ENCODE measurements at regions of chr16 and their contacts with region 1.

Region 1: DNA sequence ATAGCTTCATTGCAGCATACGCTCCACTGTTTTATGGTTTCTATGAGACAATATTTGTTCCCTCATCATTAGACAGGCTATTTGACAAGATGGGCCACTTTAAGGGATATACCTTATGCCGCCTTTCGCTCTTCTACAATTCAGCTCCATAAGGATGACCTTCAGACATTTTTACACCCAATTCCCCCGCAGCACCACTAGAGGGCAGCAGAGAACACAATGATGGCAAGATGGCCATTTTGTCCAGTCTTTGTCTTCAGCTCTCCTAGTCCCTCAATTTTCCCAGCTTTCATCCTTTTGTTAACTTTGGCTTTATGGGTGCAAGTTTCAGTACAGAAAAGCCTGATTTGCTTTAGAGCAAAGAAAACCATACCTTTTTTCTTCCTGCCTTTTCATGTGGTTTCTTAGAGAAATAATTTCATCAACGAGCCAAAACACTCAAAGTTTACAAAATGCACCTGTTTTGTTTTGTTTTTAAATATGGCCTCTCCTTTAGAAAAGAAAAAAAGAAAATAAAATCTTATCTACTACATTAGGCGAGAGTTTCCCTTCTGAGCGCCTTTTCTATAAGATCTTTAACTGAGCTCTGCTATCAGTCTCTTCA is 355.3 kb downstream of the TOX3 start:
- DNase-seq: peak; percentile 33 to 84
- H3K4me3 ChIP-seq: no peak overlapping the region
- H3K27ac ChIP-seq: no peak overlapping the region
- H3K4me1 ChIP-seq: peaks cover 0 to 3% (median 0%) of the 10 kb centered on the region in 4 experiments; a peak in 1 of 7 replicates
- H3K27me3 ChIP-seq: no peaks in the 10 kb centered on the region
- CTCF ChIP-seq: peak; percentile 71 to 92 (median 85)
- EP300 ChIP-seq: no peak
- POLR2A ChIP-seq: no peak
- RAD21 ChIP-seq: peak; percentile 96 to 98

Region 2: GRCh38 chr16:52171481-52171880 is 20.2 kb before region 1 on chr16:
- CTCF ChIA-PET with region 1: interaction called, 17 read pairs
- POLR2A ChIA-PET with region 1: no interaction called
- DNase-seq: no peak
- H3K4me3 ChIP-seq: no peak overlapping the region
- H3K27ac ChIP-seq: no peak overlapping the region
- H3K4me1 ChIP-seq: no peaks in the 10 kb centered on the region
- H3K27me3 ChIP-seq: no peaks in the 10 kb centered on the region
- CTCF ChIP-seq: peak in 2 of 3 experiments; percentile 21 to 22; a peak in 1 of 4 replicates
- EP300 ChIP-seq: no peak
- POLR2A ChIP-seq: no peak
- RAD21 ChIP-seq: peak; percentile 57 to 64

Region 3: GRCh38 chr16:52203096-52203495 is 11.5 kb after region 1 on chr16:
- CTCF ChIA-PET with region 1: interaction called, 10 read pairs
- POLR2A ChIA-PET with region 1: no interaction called
- DNase-seq: no peak
- H3K4me3 ChIP-seq: no peak overlapping the region
- H3K27ac ChIP-seq: no peak overlapping the region
- H3K4me1 ChIP-seq: no peaks in the 10 kb centered on the region
- H3K27me3 ChIP-seq: no peaks in the 10 kb centered on the region
- CTCF ChIP-seq: no peak
- EP300 ChIP-seq: no peak
- POLR2A ChIP-seq: no peak
- RAD21 ChIP-seq: no peak

Region 4: GRCh38 chr16:52597580-52598483 is 406.2 kb after region 1 on chr16:
- CTCF ChIA-PET with region 1: no interaction called
- POLR2A ChIA-PET with region 1: no interaction called
- DNase-seq: peak in 1 of 2 experiments; percentile 45
- H3K4me3 ChIP-seq: no peak overlapping the region
- H3K27ac ChIP-seq: peak overlapping the region; percentile 4; the same call in 1 of the 2 replicates
- H3K4me1 ChIP-seq: peaks cover 0 to 5% (median 4%) of the 10 kb centered on the region in 4 experiments; a peak in 3 of 7 replicates
- H3K27me3 ChIP-seq: no peaks in the 10 kb centered on the region
- CTCF ChIP-seq: no peak
- EP300 ChIP-seq: no peak
- POLR2A ChIP-seq: no peak
- RAD21 ChIP-seq: no peak

Region 5: DNA sequence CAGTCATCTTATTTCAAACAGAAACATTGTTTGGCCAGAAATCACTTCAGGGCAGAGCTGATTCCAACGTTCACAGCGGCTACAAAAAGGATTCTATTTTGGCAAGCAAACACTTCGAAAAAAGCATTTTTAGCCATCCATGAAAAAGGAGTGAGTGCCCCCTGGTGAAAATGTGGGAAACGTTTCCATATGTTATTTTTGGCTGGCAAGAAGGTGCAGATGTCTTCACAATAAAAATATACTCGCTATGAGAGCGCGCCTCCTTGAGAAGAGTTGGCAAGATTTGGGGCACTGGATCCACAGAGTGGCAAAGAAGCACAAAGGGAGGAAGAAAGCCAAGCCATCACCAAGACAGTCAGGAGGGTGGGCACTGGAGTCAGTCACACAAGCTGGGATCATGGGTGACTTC is 670.0 kb after region 1 on chr16:
- CTCF ChIA-PET with region 1: interaction called, 35 read pairs
- POLR2A ChIA-PET with region 1: no interaction called
- DNase-seq: peak; percentile 3 to 51
- H3K4me3 ChIP-seq: no peak overlapping the region
- H3K27ac ChIP-seq: no peak overlapping the region
- H3K4me1 ChIP-seq: peaks cover 0 to 3% (median 0%) of the 10 kb centered on the region in 4 experiments; a peak in 1 of 7 replicates
- H3K27me3 ChIP-seq: no peaks in the 10 kb centered on the region
- CTCF ChIP-seq: peak in 2 of 3 experiments; percentile 53 to 61; a peak in 3 of 4 replicates
- EP300 ChIP-seq: no peak
- POLR2A ChIP-seq: no peak
- RAD21 ChIP-seq: peak; percentile 86 to 90